GM13977 (cell line): ENCODE measurements at regions of chr12 and their contacts with region 1.

Region 1: GRCh38 chr12:69254046-69254445 is 14.7 kb downstream of the CPSF6 start:
- DNase-seq: peak; percentile 39
- CTCF ChIP-seq: peak; percentile 67

Region 2: GRCh38 chr12:68856510-68856909 is 397.5 kb before region 1 on chr12:
- in situ Hi-C with region 1: no loop called
- DNase-seq: no peak
- CTCF ChIP-seq: no peak

Region 3: DNA sequence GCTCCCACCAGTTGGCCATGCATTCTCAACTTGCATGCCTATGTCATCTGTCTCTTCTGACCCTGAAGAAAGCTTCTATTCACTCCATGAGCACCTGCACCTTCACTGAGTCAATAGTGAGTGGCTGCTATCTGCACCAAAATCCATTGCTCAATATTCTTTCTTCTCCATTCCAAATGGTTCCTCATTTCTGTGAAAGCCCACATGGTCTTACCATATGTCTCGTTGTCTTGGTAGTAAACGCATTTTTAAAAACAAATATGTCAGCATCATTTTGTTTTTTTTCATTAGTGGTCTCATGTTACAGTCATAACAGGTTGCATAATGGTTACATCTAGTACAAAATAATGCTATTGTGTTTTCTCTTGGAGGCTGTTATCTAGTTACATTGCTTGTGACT is 214.2 kb before region 1 on chr12:
- in situ Hi-C with region 1: no loop called
- DNase-seq: no peak
- CTCF ChIP-seq: no peak

Region 4: DNA sequence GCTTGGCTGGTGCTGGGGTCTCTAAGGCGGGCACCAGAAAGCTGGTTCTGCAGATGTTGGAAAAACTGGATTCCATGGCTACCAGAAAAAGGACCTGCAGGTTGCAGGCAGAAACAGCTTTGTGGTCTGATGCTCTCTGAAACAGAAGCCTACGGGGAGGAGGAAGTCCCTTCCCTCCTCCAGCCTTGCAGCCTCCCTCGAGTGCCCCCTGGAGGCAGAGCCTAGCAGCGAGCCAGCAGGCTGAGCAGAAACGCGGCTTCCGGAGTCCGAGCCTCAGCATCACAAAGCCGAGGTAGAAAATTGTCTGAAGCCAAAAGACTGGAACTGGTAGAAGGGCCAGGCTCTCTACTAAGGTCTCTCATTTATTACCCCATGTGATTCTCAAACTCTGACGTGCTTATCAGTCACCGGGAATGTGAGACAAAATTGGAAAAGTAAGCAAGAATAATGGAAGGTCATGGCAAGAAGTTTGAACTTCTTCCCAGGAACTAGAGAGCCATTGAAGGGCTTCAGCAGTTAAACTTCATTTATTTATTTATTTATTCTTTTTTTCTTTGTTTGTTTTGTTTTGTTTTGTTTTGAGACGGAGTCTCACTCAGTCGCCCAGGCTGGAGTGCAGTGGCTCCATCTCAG is 96.9 kb before region 1 on chr12:
- in situ Hi-C with region 1: loop called (anchors 10 kb)
- DNase-seq: peak; percentile 81
- CTCF ChIP-seq: peak; percentile 98

Region 5: GRCh38 chr12:69366796-69367195 is 112.8 kb after region 1 on chr12:
- in situ Hi-C with region 1: no loop called
- DNase-seq: no peak
- CTCF ChIP-seq: no peak